ENCODE measurements at regions of chr7 and their contacts with region 1.

Region 1: DNA sequence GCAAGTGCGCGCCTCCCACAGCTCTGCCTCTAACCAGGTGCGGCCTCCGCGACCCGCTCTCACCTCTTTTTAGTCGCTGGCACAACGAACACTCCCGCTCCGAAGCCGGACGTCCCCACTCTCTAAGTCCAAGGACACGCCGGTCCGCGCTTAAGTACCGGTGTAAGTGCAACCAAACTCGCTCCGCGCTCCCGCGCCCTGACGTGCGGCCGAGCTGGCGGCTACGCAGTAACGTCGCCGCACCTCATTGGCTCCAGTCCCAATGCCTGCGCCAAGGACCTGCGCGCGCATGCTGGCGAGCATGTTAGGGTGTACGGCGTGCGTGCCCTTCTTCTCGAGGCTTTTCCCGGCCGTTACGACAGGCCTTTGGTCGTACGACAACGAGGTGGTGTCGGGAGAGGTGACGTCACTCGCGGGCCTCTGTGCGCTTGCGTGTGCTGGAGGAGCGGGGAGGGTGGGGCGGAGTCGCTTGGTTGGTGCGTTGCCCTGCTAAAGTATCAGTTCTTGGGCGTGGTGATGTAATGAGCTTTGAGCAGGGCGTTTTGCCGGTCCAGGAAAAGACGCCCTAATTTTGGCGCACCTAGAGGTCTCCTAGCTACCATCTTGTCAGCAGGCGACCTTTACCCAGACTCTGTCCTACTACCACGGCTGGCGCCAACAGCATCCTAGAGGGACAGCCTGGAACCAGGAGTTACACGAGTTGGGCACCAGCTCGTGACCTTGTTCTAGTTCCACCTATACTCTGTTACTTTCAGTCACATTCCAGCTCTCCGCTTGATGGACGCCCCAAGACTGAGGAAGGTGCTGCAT is at the start of gene CYCS:
- DNase-seq: peak; percentile 100
- H3K4me3 ChIP-seq: peak within 1 kb of the TSS; percentile 66
- H3K27ac ChIP-seq: peak within 1 kb of the TSS; percentile 66
- H3K4me1 ChIP-seq: peaks cover 21% of the 10 kb centered on the region; the same call in 1 of the 2 replicates
- H3K27me3 ChIP-seq: peaks cover 21% of the 10 kb centered on the region
- CTCF ChIP-seq: no peak
- total RNA-seq, gene CYCS: 101 and 120 TPM in 2 replicates

Region 2: DNA sequence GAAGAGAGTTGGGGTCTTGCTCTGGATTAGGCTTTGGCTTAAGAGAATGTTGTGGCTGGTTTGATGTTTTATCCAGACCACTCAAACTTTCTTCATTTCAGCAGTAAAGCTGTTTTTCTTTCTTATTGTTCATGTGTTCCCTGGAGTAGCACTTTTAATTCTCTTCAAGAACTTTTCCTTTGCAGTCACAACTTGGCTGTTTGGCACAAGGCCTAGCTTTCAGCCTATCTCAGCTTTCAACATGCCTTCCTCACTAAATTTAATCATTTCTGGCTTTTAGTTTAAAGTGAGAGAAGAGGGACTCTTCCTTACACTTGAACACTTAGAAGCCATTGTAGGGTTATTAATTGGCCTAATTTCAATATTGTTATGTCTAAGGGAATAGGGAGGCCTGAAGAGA is 1510.0 kb before region 1 on chr7:
- CTCF ChIA-PET with region 1: no interaction called
- POLR2A ChIA-PET with region 1: interaction called, 18 read pairs
- intact Hi-C with region 1: no loop called
- DNase-seq: no peak
- H3K4me3 ChIP-seq: no peak overlapping the region
- H3K27ac ChIP-seq: no peak overlapping the region
- H3K4me1 ChIP-seq: no peaks in the 10 kb centered on the region
- H3K27me3 ChIP-seq: no peaks in the 10 kb centered on the region
- CTCF ChIP-seq: no peak

Region 3: GRCh38 chr7:24690251-24690650 is 435.1 kb before region 1 on chr7:
- CTCF ChIA-PET with region 1: interaction called, 17 read pairs
- POLR2A ChIA-PET with region 1: no interaction called
- intact Hi-C with region 1: no loop called
- DNase-seq: no peak
- H3K4me3 ChIP-seq: no peak overlapping the region
- H3K27ac ChIP-seq: no peak overlapping the region
- H3K4me1 ChIP-seq: no peaks in the 10 kb centered on the region
- H3K27me3 ChIP-seq: no peaks in the 10 kb centered on the region
- CTCF ChIP-seq: no peak